ENCODE measurements at regions of chr18 and their contacts with region 1.

Region 1: GRCh38 chr18:34358923-34359322 is 134.2 kb upstream of the NOL4 start:
- DNase-seq: no peak
- ATAC-seq: no peak
- H3K4me3 ChIP-seq: no peak overlapping the region
- H3K27ac ChIP-seq: no peak overlapping the region
- H3K4me1 ChIP-seq: no peaks in the 10 kb centered on the region
- H3K27me3 ChIP-seq: no peaks in the 10 kb centered on the region

Region 2: GRCh38 chr18:34493099-34493544 is 134.2 kb after region 1 on chr18:
- intact Hi-C with region 1: no loop called
- DNase-seq: peak; percentile 77 to 90 (median 87)
- ATAC-seq: peak; percentile 89 to 90
- H3K4me3 ChIP-seq: peak overlapping the region; percentile 82
- H3K27ac ChIP-seq: peak overlapping the region; percentile 90
- H3K4me1 ChIP-seq: no peaks in the 10 kb centered on the region
- H3K27me3 ChIP-seq: no peaks in the 10 kb centered on the region

Region 3: GRCh38 chr18:34592961-34593382 is 234.0 kb after region 1 on chr18:
- intact Hi-C with region 1: no loop called
- DNase-seq: peak; percentile 42 to 84 (median 80)
- ATAC-seq: peak; percentile 93 to 96
- H3K4me3 ChIP-seq: peak overlapping the region; percentile 85
- H3K27ac ChIP-seq: peak overlapping the region; percentile 60
- H3K4me1 ChIP-seq: no peaks in the 10 kb centered on the region
- H3K27me3 ChIP-seq: no peaks in the 10 kb centered on the region

Region 4: GRCh38 chr18:34661464-34662111 is 302.7 kb after region 1 on chr18:
- intact Hi-C with region 1: loop called in 1 of 4 experiments (anchors 5 kb)
- DNase-seq: no peak
- ATAC-seq: peak; percentile 43 to 66
- H3K4me3 ChIP-seq: no peak overlapping the region
- H3K27ac ChIP-seq: no peak overlapping the region
- H3K4me1 ChIP-seq: no peaks in the 10 kb centered on the region
- H3K27me3 ChIP-seq: no peaks in the 10 kb centered on the region

Measured in right cardiac atrium (tissue), 5 donors.